ENCODE measurements at regions of chr12 and their contacts with region 1.

Region 1: DNA sequence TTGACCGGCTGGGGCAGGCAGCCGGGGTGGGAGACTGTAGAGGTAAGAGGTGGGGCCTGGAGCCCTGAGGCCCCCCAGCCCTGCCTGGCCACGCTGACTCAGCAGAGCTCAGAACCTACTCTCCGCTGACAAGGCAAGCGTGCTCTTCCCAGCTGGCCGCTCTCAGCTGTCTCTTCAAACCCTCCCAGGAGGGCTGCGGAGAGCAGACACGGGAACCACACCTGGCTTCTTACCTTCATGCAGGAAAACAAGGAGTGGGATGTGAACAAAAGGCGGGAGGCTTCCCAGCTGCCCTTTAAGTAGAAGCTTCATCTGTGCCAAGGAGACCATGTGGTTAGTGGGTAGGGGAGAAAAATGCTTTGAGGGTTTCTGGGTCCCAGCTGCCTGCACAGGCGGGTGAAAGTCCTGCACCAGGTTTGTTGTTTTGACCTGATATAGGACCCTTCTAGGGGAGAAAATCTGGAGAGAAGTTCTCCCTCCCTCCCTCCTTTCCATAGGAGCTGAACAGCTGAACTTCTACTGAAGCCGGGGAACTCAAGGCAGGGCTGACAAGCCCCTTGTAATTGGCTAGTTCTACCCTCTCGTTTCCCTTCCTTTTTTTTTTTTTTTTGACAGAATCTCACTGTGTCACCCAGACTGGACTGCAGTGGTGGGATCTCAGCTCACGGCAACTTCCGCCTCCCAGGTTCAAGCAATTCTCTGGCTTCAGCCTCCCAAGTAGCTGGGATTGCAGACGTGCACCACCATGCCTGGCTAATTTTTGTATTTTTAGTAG is 12.8 kb upstream of the TESC start:
- DNase-seq: peak; percentile 45
- ATAC-seq: peak; percentile 72
- H3K4me3 Mint-ChIP-seq: no peak overlapping the region
- H3K27ac Mint-ChIP-seq: no peak overlapping the region; the same call in 1 of the 2 replicates
- H3K4me1 Mint-ChIP-seq: peaks cover 17% of the 10 kb centered on the region
- H3K27me3 Mint-ChIP-seq: no peaks in the 10 kb centered on the region; the same call in 1 of the 2 replicates
- CTCF ChIP-seq: no peak

Region 2: GRCh38 chr12:117018276-117018675 is 93.7 kb before region 1 on chr12:
- CTCF ChIA-PET with region 1: no interaction called
- POLR2A ChIA-PET with region 1: no interaction called
- DNase-seq: no peak
- ATAC-seq: no peak
- H3K4me3 Mint-ChIP-seq: no peak overlapping the region
- H3K27ac Mint-ChIP-seq: 0 out of 2 replicates have a peak overlapping the region, but pooled peaks have one; percentile 8
- H3K4me1 Mint-ChIP-seq: peaks cover 10% of the 10 kb centered on the region
- H3K27me3 Mint-ChIP-seq: no peaks in the 10 kb centered on the region
- CTCF ChIP-seq: no peak

Region 3: GRCh38 chr12:117098361-117099217 is 13.4 kb before region 1 on chr12:
- CTCF ChIA-PET with region 1: interaction called, 14 read pairs
- POLR2A ChIA-PET with region 1: interaction called, 4 read pairs
- DNase-seq: peak; percentile 46
- ATAC-seq: peak; percentile 52
- H3K4me3 Mint-ChIP-seq: peak overlapping the region; percentile 73
- H3K27ac Mint-ChIP-seq: no peak overlapping the region
- H3K4me1 Mint-ChIP-seq: peaks cover 18% of the 10 kb centered on the region
- H3K27me3 Mint-ChIP-seq: peaks cover 29% of the 10 kb centered on the region
- CTCF ChIP-seq: no peak

Measured in WTC11 (cell line).